Activated T-helper 1 cell treated with anti-CD3 and anti-CD28 coated beads, Interleukin-12 subunit alpha, Interleukin-12 subunit beta, Interleukin-2, Interleukin-4 antibody, amounts not matched to agents 30 ng/mL and 10 ng/mL and 1 ng/mL, durations not matched to agents 14 hours and 24 hours and 36 hours (primary cell): ENCODE measurements at regions of chr2 and their contacts with region 1.

Region 1: GRCh38 chr2:241609859-241610793 is 26.8 kb downstream of the THAP4 start:
- DNase-seq: peak; percentile 88
- H3K4me3 Mint-ChIP-seq: peak overlapping the region; percentile 78
- H3K27ac Mint-ChIP-seq: peak overlapping the region; percentile 83
- H3K4me1 Mint-ChIP-seq: peaks cover 18% of the 10 kb centered on the region
- H3K27me3 Mint-ChIP-seq: no peaks in the 10 kb centered on the region

Region 2: GRCh38 chr2:240913810-240914644 is 696.1 kb before region 1 on chr2:
- intact Hi-C with region 1: loop called (anchors 5 kb)
- DNase-seq: peak; percentile 48
- H3K4me3 Mint-ChIP-seq: no peak overlapping the region
- H3K27ac Mint-ChIP-seq: no peak overlapping the region
- H3K4me1 Mint-ChIP-seq: no peaks in the 10 kb centered on the region
- H3K27me3 Mint-ChIP-seq: peaks cover 13% of the 10 kb centered on the region

Region 3: GRCh38 chr2:241540771-241541561 is 69.2 kb before region 1 on chr2:
- intact Hi-C with region 1: loop called (anchors 1 kb)
- DNase-seq: peak; percentile 59
- H3K4me3 Mint-ChIP-seq: peak overlapping the region; percentile 70
- H3K27ac Mint-ChIP-seq: no peak overlapping the region
- H3K4me1 Mint-ChIP-seq: no peaks in the 10 kb centered on the region
- H3K27me3 Mint-ChIP-seq: peaks cover 9% of the 10 kb centered on the region

Region 4: DNA sequence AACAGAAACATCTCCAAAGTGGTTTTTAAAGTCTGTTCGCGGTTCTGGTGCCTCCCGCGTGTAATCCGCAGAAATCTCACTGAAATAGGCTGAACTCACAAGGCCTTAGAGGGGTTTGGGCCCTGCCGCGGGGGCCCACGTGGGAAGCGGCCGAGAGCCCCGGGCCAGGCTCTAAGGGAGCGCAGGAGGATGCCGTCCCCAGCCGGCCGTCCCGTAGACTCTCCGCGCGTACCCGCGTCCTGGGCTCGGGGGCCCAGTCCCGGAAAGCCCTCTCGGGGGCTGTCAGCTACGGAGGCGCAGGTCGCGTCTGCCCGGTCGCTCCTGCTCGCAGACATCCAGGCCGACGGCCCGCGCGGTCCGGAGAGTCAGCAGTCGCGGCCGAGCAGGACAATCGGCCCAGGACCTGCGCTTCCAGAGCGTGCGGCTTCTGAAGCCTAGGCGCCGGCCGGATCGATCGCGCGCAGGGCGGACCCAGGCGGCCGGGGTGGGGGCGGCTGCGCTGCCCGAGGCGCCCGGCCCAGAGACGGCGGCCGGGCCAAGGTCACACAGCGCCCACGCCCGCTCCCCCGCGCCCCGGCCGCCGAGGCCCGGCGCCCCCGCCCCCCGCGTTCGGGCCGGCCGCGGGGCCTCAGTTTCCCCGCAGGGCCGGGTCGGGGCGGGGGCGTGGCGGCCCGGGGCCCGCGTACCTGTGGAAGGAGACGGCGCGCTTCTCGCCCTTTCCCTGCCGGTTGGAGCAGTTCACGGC is 26.3 kb after region 1 on chr2:
- intact Hi-C with region 1: no loop called
- DNase-seq: peak; percentile 21
- H3K4me3 Mint-ChIP-seq: peak overlapping the region; percentile 85
- H3K27ac Mint-ChIP-seq: peak overlapping the region; percentile 76
- H3K4me1 Mint-ChIP-seq: peaks cover 37% of the 10 kb centered on the region
- H3K27me3 Mint-ChIP-seq: no peaks in the 10 kb centered on the region

Region 5: DNA sequence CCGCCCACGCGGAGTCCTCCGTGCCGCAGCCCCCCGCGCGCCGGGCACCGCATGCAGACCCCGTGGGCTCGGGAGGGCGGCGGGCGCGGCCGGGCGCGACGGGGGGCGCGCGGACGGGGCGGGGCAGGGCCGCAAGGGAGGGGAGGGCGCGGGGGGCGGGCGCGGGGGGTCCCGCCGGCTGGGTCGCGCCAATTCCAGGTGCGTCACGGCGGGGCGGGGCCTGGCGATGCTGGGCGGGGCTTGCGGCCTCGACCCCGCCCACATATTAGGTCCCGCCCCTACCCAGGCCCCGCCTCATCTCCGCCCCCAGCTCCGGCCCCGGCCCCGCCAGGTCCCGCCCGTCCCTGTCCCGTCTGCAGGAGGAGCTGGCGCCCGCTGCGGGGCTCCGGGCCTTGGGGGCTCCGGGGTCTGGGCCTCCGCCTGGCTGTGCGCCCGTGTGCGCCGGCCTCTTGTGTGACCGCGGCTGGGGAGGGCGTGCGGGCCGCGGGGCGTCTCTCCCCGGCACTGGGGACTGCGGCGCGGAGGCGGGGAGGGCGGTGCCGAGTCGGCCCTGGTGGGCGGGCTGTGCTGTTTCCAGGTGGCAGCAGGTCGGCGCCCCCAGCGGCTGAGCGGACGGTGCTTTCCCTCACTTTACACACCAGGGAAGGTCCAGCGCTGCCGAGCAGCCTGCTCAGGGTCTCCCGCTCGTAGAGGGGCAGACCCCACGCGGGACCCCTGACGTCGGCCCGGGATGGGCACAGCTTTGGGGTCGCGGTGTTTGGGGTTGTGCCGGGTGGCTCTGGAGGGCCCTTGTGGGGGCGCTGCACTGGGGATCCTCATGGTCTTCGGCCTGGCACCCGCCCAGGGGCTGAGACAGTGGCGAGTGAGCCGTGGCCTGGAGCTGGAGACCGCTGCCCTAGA is 92.3 kb after region 1 on chr2:
- intact Hi-C with region 1: loop called (anchors 1 kb)
- DNase-seq: peak; percentile 82
- H3K4me3 Mint-ChIP-seq: peak overlapping the region; percentile 78
- H3K27ac Mint-ChIP-seq: peak overlapping the region; percentile 53
- H3K4me1 Mint-ChIP-seq: peaks cover 20% of the 10 kb centered on the region
- H3K27me3 Mint-ChIP-seq: no peaks in the 10 kb centered on the region

Region 6: DNA sequence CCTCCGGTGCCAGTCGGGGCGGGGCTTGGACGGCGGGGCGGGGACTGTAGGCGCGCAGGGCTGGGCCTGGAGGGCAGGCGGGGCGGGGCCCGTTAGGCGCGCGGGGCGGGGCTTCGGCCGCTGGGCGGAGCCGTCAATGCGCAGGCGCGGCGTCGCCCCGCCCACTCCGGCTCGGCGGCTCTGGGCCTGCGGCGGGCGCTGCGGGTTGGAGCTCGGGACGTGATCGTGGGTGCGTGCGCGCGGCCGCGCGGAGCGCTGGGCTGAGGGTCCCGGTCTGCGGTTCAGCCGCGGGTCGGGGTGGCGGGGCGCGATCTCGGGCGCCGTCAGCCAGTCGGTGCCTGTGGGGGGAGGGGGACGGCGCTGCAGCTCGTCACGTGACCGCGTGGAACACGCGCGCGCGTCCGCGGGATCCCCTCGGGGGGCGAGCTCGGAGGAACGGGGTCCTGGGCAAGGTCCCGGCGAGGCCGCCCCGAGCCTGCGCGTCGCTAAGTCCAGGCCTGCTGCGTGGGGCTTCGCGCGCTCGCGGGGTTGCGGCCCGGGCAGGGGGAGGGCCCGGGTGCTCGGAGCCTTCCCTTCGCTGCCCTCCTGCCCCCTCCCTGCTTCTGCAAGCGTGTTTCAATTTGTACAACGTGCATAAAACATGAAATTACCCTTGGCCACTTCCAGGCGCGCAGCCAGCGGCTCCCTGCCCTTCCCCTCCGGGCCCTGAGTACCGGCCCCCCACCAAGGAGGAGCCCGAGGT is 124.5 kb after region 1 on chr2 and contains the start of gene D2HGDH:
- intact Hi-C with region 1: loop called (anchors 1 kb)
- DNase-seq: peak; percentile 89
- H3K4me3 Mint-ChIP-seq: peak within 1 kb of the TSS; percentile 82
- H3K27ac Mint-ChIP-seq: no peak within 1 kb of the TSS
- H3K4me1 Mint-ChIP-seq: peaks cover 41% of the 10 kb centered on the region
- H3K27me3 Mint-ChIP-seq: peaks cover 3% of the 10 kb centered on the region
- total RNA-seq, gene D2HGDH: 27.1 and 28.7 TPM in 2 replicates